ENCODE measurements at regions of chrX and their contacts with region 1.

Region 1: GRCh38 chrX:101595739-101596419 is 21.9 kb downstream of the ARMCX6 start:
- DNase-seq: peak; percentile 33
- ATAC-seq: peak; percentile 88
- H3K4me3 ChIP-seq: no peak overlapping the region
- H3K27ac ChIP-seq: no peak overlapping the region
- H3K4me1 ChIP-seq: no peaks in the 10 kb centered on the region
- H3K27me3 ChIP-seq: peaks cover 11% of the 10 kb centered on the region
- CTCF ChIP-seq: peak; percentile 71

Region 2: DNA sequence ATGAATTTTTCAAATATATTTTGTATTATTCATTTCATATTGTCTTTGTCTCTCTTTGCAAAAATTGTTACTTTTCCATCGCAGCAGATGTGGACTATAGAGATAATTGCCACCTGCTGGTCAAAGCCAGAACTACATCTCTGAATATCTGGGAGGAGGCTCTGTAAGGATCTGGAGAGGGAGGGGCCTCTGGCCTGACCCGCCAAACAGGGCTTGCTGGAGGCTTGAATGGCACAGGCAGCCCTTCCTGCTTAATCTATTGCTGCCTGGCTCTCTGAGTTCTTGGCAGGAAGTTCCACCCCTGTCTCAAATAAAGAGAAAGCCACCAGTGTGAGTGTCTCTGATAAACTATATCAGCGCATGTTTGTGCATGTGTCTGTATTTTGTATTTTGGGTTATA is 203.5 kb after region 1 on chrX:
- CTCF ChIA-PET with region 1: no interaction called
- POLR2A ChIA-PET with region 1: no interaction called
- in situ Hi-C with region 1: no loop called
- intact Hi-C with region 1: loop called (anchors 5 kb)
- DNase-seq: peak; percentile 61
- ATAC-seq: peak; percentile 100
- H3K4me3 ChIP-seq: peak overlapping the region; percentile 21 to 23
- H3K27ac ChIP-seq: no peak overlapping the region
- H3K4me1 ChIP-seq: no peaks in the 10 kb centered on the region
- H3K27me3 ChIP-seq: no peaks in the 10 kb centered on the region; the same call in 1 of the 2 replicates
- CTCF ChIP-seq: peak; percentile 77

Measured in Panc1 (cell line).